PC-9 (cell line): ENCODE measurements at regions of chr1 and their contacts with region 1.

Region 1: GRCh38 chr1:93680757-93681550 is 683 bp downstream of the BCAR3 start:
- DNase-seq: peak; percentile 76 to 86
- H3K4me3 ChIP-seq: peak overlapping the region; percentile 80
- H3K27ac ChIP-seq: peak overlapping the region; percentile 81
- H3K4me1 ChIP-seq: peaks cover 69% of the 10 kb centered on the region
- H3K27me3 ChIP-seq: no peaks in the 10 kb centered on the region
- CTCF ChIP-seq: peak; percentile 72

Region 2: GRCh38 chr1:93447516-93448291 is 233.2 kb before region 1 on chr1 and contains the start of gene FNBP1L:
- CTCF ChIA-PET with region 1: no interaction called
- POLR2A ChIA-PET with region 1: no interaction called
- intact Hi-C with region 1: loop called (anchors 5 kb)
- DNase-seq: peak; percentile 76 to 86
- H3K4me3 ChIP-seq: peak within 1 kb of the TSS; percentile 90
- H3K27ac ChIP-seq: peak within 1 kb of the TSS; percentile 44
- H3K4me1 ChIP-seq: peaks cover 28% of the 10 kb centered on the region
- H3K27me3 ChIP-seq: no peaks in the 10 kb centered on the region
- CTCF ChIP-seq: no peak
- total RNA-seq, gene FNBP1L: 34.1 and 34.3 TPM in 2 replicates

Region 3: DNA sequence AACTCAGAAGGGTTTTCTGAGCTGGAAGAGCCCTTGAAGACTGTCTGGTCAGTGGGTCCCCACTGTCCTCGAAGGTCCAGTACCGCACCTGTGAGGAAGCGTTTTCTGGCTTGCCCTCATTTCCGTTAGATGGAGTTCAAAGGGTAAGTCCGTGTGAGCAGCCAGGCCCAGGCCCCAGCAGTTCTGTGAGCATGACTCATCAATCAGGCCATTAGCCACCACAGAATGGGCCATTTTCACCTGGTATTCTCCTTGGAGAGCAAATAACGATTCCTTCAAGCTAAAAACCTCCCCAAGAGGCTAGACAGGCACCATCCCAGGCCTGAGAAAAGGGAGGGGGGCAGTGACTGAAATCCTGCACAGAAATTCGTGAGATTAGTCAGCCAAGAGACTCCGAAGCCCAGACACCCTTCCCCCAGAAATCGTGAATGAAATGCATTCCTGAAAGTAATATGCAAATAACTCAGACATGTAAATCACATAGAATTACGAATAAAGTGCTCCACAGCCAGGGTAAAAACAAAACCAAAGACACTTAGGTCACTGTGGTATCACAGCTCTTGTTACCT is 65.3 kb before region 1 on chr1:
- CTCF ChIA-PET with region 1: interaction called, 15 read pairs
- POLR2A ChIA-PET with region 1: no interaction called
- intact Hi-C with region 1: no loop called
- DNase-seq: peak; percentile 33 to 57
- H3K4me3 ChIP-seq: peak overlapping the region; percentile 3; the same call in 1 of the 2 replicates
- H3K27ac ChIP-seq: peak overlapping the region; percentile 81
- H3K4me1 ChIP-seq: peaks cover 77% of the 10 kb centered on the region
- H3K27me3 ChIP-seq: no peaks in the 10 kb centered on the region
- CTCF ChIP-seq: no peak

Region 4: DNA sequence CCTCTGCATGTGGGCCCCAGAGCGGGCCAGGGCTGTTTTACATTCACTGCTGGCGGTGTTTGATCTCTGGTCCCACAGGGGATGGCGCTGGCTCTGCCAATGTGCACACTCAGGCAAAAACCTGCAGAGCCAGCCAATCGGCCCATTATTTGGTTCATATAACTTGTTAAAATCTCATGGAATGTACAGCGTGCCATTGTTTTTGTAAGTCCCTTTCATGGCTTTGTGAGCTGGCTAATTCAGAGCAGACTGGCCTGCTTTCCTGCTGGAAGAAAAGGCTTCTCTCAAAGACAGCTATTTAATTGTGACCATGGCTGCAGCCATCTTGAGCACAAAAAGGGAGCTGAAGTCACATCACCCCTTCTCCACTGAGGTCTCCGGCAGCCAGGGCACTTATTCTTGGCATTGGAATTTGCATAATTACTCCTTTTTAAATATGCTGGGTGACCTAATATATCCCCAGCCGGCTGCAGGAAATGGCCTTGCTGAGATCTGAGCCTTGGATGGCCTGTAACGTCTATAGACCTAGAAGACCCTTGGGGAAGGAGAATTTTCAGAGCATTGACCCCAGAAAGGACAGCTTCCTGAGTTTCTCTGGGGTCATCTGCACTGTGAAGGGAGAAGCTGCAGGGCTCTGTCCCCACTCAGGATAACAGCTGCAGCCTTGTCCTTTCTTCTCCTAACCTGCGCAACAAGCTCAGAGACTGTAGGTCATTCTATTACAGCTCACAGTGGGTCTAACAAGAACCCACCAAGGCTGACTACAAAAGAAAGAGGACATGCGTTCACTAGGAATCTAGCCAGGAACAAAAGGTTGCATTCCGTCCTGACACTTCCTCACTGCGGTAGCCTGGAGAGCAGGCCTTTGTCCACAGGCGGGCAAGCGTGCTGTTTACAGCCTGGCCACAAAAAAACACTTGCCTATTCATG is 45.1 kb before region 1 on chr1:
- CTCF ChIA-PET with region 1: interaction called, 3 read pairs
- POLR2A ChIA-PET with region 1: interaction called, 5 read pairs
- intact Hi-C with region 1: loop called (anchors 2 kb)
- DNase-seq: no peak
- H3K4me3 ChIP-seq: no peak overlapping the region
- H3K27ac ChIP-seq: no peak overlapping the region
- H3K4me1 ChIP-seq: peaks cover 61% of the 10 kb centered on the region
- H3K27me3 ChIP-seq: no peaks in the 10 kb centered on the region
- CTCF ChIP-seq: no peak

Region 5: GRCh38 chr1:93692983-93693591 is 12.1 kb after region 1 on chr1:
- CTCF ChIA-PET with region 1: interaction called, 3 read pairs
- POLR2A ChIA-PET with region 1: interaction called, 17 read pairs
- intact Hi-C with region 1: no loop called
- DNase-seq: peak; percentile 74 to 98
- H3K4me3 ChIP-seq: peak overlapping the region; percentile 43
- H3K27ac ChIP-seq: peak overlapping the region; percentile 99
- H3K4me1 ChIP-seq: peaks cover 75% of the 10 kb centered on the region
- H3K27me3 ChIP-seq: no peaks in the 10 kb centered on the region
- CTCF ChIP-seq: no peak

Region 6: GRCh38 chr1:93734999-93735398 is 54.0 kb after region 1 on chr1:
- CTCF ChIA-PET with region 1: no interaction called
- POLR2A ChIA-PET with region 1: interaction called, 11 read pairs
- intact Hi-C with region 1: no loop called
- DNase-seq: no peak
- H3K4me3 ChIP-seq: no peak overlapping the region
- H3K27ac ChIP-seq: no peak overlapping the region
- H3K4me1 ChIP-seq: peaks cover 41% of the 10 kb centered on the region
- H3K27me3 ChIP-seq: no peaks in the 10 kb centered on the region
- CTCF ChIP-seq: peak; percentile 50; the same call in 1 of the 2 replicates

Region 7: GRCh38 chr1:93846211-93846991 is 165.4 kb after region 1 on chr1:
- CTCF ChIA-PET with region 1: interaction called, 8 read pairs
- POLR2A ChIA-PET with region 1: no interaction called
- intact Hi-C with region 1: loop called (anchors 1 kb)
- DNase-seq: peak; percentile 77 to 81
- H3K4me3 ChIP-seq: peak overlapping the region; percentile 94
- H3K27ac ChIP-seq: peak overlapping the region; percentile 81
- H3K4me1 ChIP-seq: peaks cover 36% of the 10 kb centered on the region
- H3K27me3 ChIP-seq: no peaks in the 10 kb centered on the region
- CTCF ChIP-seq: peak; percentile 37; the same call in 1 of the 2 replicates